Activated CD4-positive, alpha-beta T cell treated with anti-CD3 and anti-CD28 coated beads for 36 hours (primary cell): ENCODE measurements at regions of chr2 and their contacts with region 1.

Region 1: GRCh38 chr2:101387151-101387807 is at the start of gene CREG2:
- DNase-seq: peak; percentile 81
- ATAC-seq: peak; percentile 93
- H3K4me3 Mint-ChIP-seq: peak within 1 kb of the TSS; percentile 55
- H3K27ac Mint-ChIP-seq: no peak within 1 kb of the TSS
- H3K4me1 Mint-ChIP-seq: peaks cover 6% of the 10 kb centered on the region
- H3K27me3 Mint-ChIP-seq: peaks cover 34% of the 10 kb centered on the region
- total RNA-seq, gene CREG2: not detected

Region 2: GRCh38 chr2:99890568-99891427 is 1496.5 kb before region 1 on chr2:
- CTCF ChIA-PET with region 1: no interaction called
- POLR2A ChIA-PET with region 1: no interaction called
- intact Hi-C with region 1: no loop called
- DNase-seq: no peak
- ATAC-seq: no peak
- H3K4me3 Mint-ChIP-seq: no peak overlapping the region
- H3K27ac Mint-ChIP-seq: no peak overlapping the region
- H3K4me1 Mint-ChIP-seq: no peaks in the 10 kb centered on the region
- H3K27me3 Mint-ChIP-seq: no peaks in the 10 kb centered on the region

Region 3: DNA sequence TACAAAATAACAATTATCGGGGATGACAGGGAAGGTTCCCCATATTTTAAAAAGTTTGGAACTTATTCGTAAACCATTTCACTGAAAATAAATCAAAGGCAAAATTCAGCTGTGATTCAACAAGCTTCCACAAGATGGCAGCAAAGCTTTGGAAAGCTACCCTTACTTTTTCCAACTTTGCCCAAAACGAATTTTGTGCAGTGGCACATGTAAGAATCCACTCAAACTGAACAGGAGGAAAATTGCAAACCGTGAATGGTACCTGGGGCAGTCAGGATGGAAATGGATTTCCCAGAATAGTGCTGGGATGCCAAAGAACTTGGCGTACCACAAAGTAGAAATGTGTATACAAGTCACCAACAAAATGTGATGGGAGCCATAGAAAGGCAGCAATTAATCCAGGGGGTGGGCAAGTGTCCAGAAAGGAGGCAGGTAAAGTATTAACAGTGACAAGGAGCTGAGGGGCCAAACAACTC is 374.5 kb before region 1 on chr2:
- CTCF ChIA-PET with region 1: no interaction called
- POLR2A ChIA-PET with region 1: no interaction called
- intact Hi-C with region 1: loop called in 1 of 2 experiments (anchors 2 kb)
- DNase-seq: peak; percentile 49
- ATAC-seq: no peak
- H3K4me3 Mint-ChIP-seq: no peak overlapping the region
- H3K27ac Mint-ChIP-seq: peak overlapping the region; percentile 55
- H3K4me1 Mint-ChIP-seq: peaks cover 31% of the 10 kb centered on the region
- H3K27me3 Mint-ChIP-seq: no peaks in the 10 kb centered on the region

Region 4: DNA sequence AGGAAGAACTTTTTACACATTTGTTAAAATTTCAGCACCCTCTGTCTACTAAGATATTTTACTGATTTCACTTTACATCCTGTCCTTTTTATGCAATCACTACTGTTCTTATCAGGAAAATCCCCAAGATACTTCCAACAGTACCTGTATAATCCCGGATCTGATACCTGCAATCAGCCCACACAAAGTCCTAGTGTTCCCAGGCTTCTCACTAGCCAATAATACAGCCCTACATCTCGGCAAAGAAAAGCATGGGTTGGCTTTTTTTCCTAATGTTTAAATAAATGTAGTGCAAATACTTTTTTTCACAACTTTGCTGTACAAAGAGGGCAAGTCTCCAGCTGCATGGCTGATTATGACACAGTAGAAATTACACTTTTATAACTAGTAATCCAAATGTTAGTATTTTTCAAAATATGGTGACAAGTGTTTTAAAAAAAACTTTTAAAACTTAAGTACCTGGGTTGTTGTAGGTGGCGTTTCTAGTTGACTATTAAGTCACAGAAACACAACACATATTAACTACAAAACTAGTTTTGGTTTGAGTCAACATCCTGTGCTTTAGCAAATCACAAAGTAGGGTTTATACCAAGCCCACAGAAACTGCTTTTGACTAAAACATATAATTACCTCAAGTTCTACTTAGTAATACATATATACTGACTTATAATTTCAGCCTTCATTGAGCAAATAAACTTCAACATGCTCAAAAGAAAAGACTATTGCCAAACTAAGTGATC is 115.1 kb before region 1 on chr2:
- CTCF ChIA-PET with region 1: no interaction called
- POLR2A ChIA-PET with region 1: interaction called, 5 read pairs
- intact Hi-C with region 1: loop called in 1 of 2 experiments (anchors 10 kb)
- DNase-seq: no peak
- ATAC-seq: peak; percentile 97
- H3K4me3 Mint-ChIP-seq: no peak overlapping the region
- H3K27ac Mint-ChIP-seq: peak overlapping the region; percentile 69
- H3K4me1 Mint-ChIP-seq: peaks cover 41% of the 10 kb centered on the region
- H3K27me3 Mint-ChIP-seq: no peaks in the 10 kb centered on the region

Region 5: GRCh38 chr2:101349893-101350662 is 37.2 kb before region 1 on chr2:
- CTCF ChIA-PET with region 1: interaction called, 18 read pairs
- POLR2A ChIA-PET with region 1: no interaction called
- intact Hi-C with region 1: no loop called
- DNase-seq: no peak
- ATAC-seq: no peak
- H3K4me3 Mint-ChIP-seq: no peak overlapping the region
- H3K27ac Mint-ChIP-seq: no peak overlapping the region
- H3K4me1 Mint-ChIP-seq: peaks cover 5% of the 10 kb centered on the region
- H3K27me3 Mint-ChIP-seq: no peaks in the 10 kb centered on the region

Region 6: DNA sequence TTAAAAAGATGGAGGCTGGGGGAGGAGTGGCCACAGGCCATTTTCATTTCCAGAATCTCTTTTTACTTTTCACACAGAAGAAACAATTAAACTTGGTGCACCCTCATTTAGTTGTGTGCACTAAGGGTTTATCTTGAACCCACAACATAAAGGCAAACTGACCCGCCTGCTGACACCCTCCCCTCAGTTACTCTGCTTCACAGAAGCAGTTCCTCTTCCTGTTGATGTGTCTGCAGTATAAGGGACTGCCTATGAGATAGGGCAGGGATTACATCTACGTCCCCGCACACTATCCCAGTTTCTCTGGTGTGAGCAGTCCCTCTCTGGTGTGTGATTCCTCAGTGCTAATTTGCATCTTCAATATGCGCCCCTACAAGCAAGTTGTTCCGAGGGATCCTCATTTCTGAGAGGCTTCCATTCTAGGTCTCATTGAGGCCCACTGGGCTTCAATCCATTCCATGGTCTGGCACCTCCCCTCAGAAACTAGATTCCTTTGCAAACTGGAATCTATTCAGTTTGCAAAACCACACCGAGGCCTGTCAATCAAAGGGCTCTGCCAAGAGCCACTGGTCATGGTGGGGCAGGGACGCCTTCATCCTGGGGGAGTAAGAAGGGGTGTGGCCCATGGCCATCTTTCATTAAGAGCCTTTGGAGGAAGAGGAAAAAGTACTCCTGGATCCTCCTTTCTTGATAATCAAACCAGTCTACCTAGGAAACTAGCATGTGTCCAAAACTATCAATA is 12.3 kb before region 1 on chr2:
- CTCF ChIA-PET with region 1: interaction called, 12 read pairs
- POLR2A ChIA-PET with region 1: no interaction called
- intact Hi-C with region 1: no loop called
- DNase-seq: no peak
- ATAC-seq: no peak
- H3K4me3 Mint-ChIP-seq: no peak overlapping the region
- H3K27ac Mint-ChIP-seq: no peak overlapping the region
- H3K4me1 Mint-ChIP-seq: peaks cover 7% of the 10 kb centered on the region
- H3K27me3 Mint-ChIP-seq: no peaks in the 10 kb centered on the region